HEK293 (cell line): ENCODE measurements at regions of chr10 and their contacts with region 1.

Region 1: GRCh38 chr10:102399217-102400089 is 3.9 kb downstream of the NFKB2 start:
- H3K4me3 ChIP-seq: peak overlapping the region; percentile 57
- H3K27ac ChIP-seq: peak overlapping the region; percentile 74; the same call in 1 of the 2 replicates
- H3K4me1 ChIP-seq: peaks cover 5% of the 10 kb centered on the region; the same call in 1 of the 2 replicates
- CTCF ChIP-seq: peak; percentile 100

Region 2: GRCh38 chr10:102167861-102168260 is 231.6 kb before region 1 on chr10:
- CTCF ChIA-PET with region 1: interaction called, 11 read pairs
- POLR2A ChIA-PET with region 1: interaction called, 3 read pairs
- H3K4me3 ChIP-seq: no peak overlapping the region
- H3K27ac ChIP-seq: no peak overlapping the region
- H3K4me1 ChIP-seq: no peaks in the 10 kb centered on the region
- CTCF ChIP-seq: no peak

Region 3: DNA sequence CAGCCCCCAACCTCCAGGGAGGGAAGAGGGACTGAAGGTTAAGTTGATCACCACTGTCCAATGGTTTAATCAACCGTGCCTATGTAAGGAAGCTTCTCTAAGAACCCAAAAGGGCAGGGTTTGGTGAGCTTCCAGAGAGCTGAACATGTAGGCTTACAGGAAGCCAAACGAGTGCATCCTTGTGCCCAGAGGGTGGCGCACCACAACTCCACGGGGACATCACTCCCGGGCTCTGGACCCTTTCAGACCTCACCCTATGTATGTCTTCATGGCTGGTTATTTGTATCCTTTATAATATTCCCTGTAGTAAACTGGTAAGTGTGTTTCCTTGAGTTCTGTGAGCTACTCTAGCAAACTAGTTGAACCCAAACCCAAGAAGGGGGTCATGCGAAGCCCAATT is 15.4 kb before region 1 on chr10:
- CTCF ChIA-PET with region 1: interaction called, 60 read pairs
- POLR2A ChIA-PET with region 1: interaction called, 4 read pairs
- H3K4me3 ChIP-seq: no peak overlapping the region
- H3K27ac ChIP-seq: no peak overlapping the region
- H3K4me1 ChIP-seq: 0 out of 2 replicates have a peak, but pooled peaks cover 2% of the 10 kb centered on the region
- CTCF ChIP-seq: no peak